ENCODE measurements at regions of chr11 and their contacts with region 1.

Region 1: DNA sequence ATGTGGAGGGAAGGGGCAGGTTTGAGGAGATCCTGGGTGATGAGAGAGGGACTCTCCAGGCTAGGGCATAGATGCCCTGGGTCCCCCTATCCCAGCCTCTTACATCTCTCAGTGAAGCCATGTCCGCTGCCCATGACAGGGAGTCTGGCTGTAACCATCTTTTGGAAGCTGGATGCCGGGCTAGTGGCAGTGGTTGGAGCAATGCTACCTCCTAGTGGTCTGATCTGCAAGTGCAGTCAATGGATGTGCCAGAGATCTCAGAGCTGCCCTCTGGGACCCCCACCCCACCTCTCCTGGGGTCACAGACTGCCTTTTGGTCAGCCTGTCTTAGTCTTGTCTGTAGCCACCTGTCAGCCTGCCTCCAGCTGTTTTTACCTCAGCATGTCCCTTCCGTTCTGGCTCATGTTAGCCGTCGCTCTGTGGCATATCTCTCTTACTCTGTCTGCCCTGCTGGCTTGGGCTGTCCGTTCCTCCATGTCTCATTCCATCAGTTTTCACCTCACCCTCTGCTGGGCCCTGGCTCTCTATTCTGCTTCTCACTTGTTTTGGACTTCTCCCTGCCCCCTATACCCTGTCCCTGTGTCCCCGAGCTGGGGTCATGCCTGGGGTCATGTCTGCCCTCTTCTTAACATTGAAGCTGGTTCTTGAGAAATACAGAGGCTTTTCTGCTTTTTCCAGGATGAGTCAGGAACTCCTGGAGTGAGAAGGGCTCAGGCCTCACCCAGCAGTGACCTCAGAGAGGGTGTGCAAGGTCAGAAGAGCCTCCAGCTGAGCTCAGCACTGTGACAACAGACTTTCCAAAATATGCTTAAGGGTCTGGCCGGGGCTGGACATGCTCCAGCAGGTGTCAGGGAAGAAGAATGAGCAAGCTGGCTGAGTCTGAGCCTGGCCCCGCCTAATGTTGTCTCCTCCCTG is 52.0 kb upstream of the THY1 start:
- DNase-seq: no peak
- H3K4me3 ChIP-seq: no peak overlapping the region
- CTCF ChIP-seq: peak; percentile 93

Region 2: DNA sequence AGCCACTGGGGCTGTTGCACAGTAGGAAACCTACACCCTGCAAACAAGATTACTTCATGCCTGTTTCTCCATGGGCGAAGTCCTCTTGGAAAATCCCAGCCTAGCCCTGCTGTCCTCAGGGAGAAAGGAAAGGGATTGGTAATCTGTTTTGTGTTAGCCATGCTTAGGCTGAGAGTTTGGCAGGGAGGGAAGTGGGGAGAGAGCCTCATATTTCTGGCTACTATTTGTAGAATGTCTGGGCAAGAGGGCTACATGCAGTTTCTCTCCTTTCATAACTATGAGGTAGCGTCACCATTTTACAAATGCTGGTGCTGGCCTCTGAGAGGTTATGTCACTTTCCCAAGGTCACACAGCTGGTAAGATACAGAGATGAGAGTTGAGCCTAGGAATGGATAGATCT is 127.7 kb before region 1 on chr11:
- CTCF ChIA-PET with region 1: interaction called, 25 read pairs
- POLR2A ChIA-PET with region 1: interaction called, 3 read pairs
- DNase-seq: no peak
- H3K4me3 ChIP-seq: no peak overlapping the region
- CTCF ChIP-seq: no peak

Region 3: GRCh38 chr11:119363851-119364590 is 110.9 kb before region 1 on chr11:
- CTCF ChIA-PET with region 1: interaction called, 425 read pairs
- POLR2A ChIA-PET with region 1: interaction called, 4 read pairs
- DNase-seq: no peak
- H3K4me3 ChIP-seq: peak overlapping the region; percentile 50
- CTCF ChIP-seq: no peak

Region 4: DNA sequence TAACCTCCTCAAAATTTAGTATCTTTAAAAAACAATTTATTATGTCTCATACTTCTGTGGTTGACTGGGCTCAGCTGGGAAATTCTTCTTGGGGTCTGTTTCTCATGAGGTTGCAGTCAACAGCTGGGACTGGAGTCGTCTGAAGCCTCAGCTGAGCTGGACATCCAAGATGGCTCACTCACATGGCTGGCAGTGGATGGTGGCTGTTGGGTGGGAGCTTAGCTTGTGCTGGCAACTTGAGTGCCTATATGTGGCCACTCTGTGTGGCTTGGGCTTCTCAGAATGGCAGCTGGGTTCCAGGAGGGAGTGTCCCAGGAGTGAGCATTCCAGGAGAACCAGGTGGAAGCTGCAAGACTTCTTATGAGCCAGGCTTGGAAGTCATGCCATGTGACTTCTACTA is 65.2 kb before region 1 on chr11:
- CTCF ChIA-PET with region 1: interaction called, 103 read pairs
- POLR2A ChIA-PET with region 1: interaction called, 16 read pairs
- DNase-seq: no peak
- H3K4me3 ChIP-seq: no peak overlapping the region
- CTCF ChIP-seq: no peak

Region 5: DNA sequence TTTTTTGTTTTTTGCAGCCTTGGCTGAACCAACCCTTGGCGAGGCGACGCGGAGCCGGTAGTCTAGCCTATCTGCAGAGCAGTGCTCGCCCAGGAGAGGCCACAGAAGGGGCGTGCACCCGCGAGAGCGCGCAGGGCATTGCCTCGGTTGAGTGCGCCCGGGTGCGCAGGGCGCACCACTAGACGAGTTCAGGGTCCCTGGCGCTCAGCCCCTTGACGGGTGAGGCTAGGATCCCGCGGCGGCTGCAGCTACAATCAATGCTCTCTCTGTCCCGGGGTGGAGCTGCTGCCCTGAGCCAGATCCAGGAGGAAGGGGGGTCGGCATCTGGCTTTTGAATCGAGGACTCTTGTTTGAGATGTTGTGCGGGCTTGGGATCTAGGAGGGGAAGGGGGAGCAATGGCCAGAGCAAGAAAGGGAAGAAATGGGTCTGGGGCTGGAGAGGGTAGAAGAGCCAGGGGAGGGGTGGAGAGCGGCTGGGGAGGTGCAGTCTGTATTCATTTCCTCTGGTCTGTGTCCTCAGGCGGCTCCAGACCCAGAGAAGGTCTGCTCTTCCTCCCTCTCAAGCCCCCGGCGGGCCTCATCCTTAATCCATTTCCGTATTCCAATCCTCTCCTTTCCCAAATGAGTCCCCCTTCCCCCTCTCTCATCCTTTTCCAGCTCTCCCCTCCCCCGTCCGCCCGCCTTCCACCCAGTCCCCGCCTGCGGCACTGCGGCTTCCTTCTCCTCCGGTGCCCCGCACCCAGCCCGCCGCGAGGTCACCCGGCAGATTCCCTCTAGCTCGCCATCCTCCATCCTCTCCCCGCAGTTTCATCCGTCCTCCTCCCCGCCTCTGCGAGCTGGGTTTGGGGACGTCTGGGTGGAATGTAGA is 52.8 kb before region 1 on chr11:
- CTCF ChIA-PET with region 1: interaction called, 103 read pairs
- POLR2A ChIA-PET with region 1: interaction called, 19 read pairs
- DNase-seq: no peak
- H3K4me3 ChIP-seq: peak overlapping the region; percentile 91
- CTCF ChIP-seq: no peak

Region 6: GRCh38 chr11:119460582-119460981 is 14.4 kb before region 1 on chr11:
- CTCF ChIA-PET with region 1: interaction called, 46 read pairs
- POLR2A ChIA-PET with region 1: interaction called, 4 read pairs
- DNase-seq: peak; percentile 88
- H3K4me3 ChIP-seq: no peak overlapping the region
- CTCF ChIP-seq: no peak

Measured in AG04449 (cell line).